ENCODE measurements at regions of chr9 and their contacts with region 1.

Region 1: GRCh38 chr9:36190388-36191287 is at the start of gene CLTA:
- DNase-seq: peak; percentile 96
- ATAC-seq: peak; percentile 99
- H3K4me3 Mint-ChIP-seq: peak within 1 kb of the TSS; percentile 95
- H3K27ac Mint-ChIP-seq: peak within 1 kb of the TSS; percentile 88
- H3K4me1 Mint-ChIP-seq: peaks cover 45% of the 10 kb centered on the region
- H3K27me3 Mint-ChIP-seq: no peaks in the 10 kb centered on the region
- total RNA-seq, gene CLTA: 123 to 133 TPM

Region 2: DNA sequence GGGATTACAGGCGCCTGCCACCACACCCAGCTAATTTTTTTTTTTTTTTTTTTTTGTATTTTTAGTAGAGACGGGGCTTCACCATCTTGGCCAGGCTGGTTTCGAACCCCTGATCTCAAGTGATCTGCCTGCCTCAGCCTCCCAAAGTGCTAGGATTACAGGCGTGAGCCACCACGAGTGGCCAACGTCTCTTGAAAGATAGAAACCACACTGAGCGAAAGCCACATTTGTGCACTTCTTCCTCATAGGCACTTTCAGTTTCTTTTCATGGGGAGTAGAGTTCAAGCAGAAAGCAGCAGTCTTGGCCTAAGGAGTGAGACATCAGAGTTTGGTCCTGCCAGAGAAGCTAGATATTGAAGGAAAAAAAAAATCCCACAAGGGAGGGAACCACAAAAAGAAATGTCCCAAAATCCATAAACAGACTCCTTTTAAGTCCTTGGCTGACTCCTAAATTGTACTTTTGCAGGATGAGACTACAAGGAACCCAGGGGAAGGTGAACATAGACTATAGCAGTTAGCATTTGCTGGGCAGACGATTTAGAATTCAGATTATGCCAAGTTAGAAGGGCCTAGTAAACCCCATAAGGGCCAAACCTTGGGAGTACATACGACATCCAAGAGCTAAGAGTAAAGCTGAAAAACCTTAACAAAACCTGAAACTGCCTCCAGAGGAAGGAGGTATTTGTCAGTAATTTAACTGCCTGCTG is 98.0 kb before region 1 on chr9:
- CTCF ChIA-PET with region 1: no interaction called
- POLR2A ChIA-PET with region 1: no interaction called
- intact Hi-C with region 1: no loop called
- DNase-seq: peak; percentile 60
- ATAC-seq: peak; percentile 99
- H3K4me3 Mint-ChIP-seq: no peak overlapping the region
- H3K27ac Mint-ChIP-seq: peak overlapping the region; percentile 39
- H3K4me1 Mint-ChIP-seq: peaks cover 18% of the 10 kb centered on the region
- H3K27me3 Mint-ChIP-seq: no peaks in the 10 kb centered on the region

Region 3: DNA sequence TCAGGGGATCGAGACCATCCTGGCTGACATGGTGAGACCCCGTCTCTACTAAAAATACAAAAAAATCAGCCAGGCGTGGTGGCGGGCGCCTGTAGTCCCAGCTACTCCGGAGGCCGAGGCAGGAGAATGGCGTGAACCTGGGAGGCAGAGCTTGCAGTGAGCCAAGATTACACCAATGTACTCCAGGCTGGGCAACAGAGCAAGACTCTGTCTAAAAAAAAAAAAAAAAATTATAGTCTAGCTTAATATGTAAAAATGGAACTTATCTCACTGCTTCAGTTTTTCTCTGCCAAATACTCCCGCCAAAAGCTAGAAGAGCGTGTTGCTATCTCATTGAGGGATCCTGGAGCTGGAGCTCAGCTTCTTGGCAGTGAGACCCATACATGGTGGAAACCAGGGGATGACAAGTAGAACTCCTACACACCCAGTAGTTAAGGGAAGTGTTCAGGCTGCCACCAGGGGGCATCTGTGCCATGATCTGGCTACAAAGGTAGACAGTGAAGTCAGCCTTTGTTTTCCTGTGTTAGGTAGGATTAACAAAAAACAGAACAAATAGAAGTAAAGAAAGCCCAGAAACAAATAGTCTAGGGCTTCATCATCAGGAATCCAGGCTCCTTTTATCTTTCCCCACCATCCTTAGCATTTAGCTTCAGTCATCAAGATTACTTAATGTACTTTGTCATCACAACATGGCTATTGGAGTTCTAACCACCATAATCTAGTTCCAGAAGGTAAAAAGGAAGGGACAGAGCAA is 87.7 kb before region 1 on chr9:
- CTCF ChIA-PET with region 1: interaction called, 24 read pairs
- POLR2A ChIA-PET with region 1: no interaction called
- intact Hi-C with region 1: no loop called
- DNase-seq: peak; percentile 94
- ATAC-seq: peak; percentile 100
- H3K4me3 Mint-ChIP-seq: no peak overlapping the region
- H3K27ac Mint-ChIP-seq: no peak overlapping the region
- H3K4me1 Mint-ChIP-seq: peaks cover 6% of the 10 kb centered on the region
- H3K27me3 Mint-ChIP-seq: no peaks in the 10 kb centered on the region

Region 4: DNA sequence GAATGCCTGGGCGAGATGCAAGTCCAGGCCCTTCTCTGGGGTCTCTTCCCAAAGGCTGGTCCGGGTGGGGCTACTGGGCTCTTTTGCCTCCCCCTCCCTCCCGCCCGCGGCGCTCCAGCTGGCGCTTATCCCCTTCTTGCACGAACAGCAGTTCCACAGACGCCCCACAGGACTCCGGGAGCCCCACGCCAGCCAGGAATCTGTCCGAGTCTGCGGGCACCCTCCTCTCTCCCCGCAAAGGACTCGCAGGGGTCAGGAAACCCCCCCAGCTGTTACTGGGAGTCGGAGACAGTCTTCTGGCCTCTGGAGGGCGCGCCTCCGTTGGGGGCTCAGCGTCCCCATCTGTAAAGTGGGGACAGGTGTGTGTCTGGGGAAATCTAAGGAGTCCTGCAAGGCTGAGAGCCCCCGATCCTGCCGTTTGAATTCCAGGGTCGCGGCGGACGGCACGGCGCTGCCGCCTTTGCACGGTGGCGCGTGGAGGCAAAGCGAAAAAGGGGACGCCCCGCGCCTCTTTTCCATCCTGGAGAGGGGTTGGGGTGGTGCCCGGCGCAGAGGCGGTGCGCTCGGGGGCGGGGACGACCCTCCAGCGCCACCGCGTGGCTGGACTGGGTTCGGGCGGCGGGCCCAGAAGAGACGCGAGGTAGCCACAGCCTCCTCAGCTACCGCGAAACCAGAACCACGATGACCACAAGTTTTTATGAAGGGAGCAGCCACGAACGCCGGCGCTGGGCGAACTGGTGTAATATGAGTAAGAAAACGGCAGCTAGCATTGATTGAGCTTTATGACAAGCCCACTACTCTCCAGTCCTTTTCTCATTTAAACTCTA is 24.3 kb before region 1 on chr9:
- CTCF ChIA-PET with region 1: interaction called, 25 read pairs
- POLR2A ChIA-PET with region 1: interaction called, 3 read pairs
- intact Hi-C with region 1: no loop called
- DNase-seq: peak; percentile 90
- ATAC-seq: peak; percentile 97
- H3K4me3 Mint-ChIP-seq: peak overlapping the region; percentile 69
- H3K27ac Mint-ChIP-seq: peak overlapping the region; percentile 31
- H3K4me1 Mint-ChIP-seq: peaks cover 6% of the 10 kb centered on the region
- H3K27me3 Mint-ChIP-seq: no peaks in the 10 kb centered on the region

Region 5: DNA sequence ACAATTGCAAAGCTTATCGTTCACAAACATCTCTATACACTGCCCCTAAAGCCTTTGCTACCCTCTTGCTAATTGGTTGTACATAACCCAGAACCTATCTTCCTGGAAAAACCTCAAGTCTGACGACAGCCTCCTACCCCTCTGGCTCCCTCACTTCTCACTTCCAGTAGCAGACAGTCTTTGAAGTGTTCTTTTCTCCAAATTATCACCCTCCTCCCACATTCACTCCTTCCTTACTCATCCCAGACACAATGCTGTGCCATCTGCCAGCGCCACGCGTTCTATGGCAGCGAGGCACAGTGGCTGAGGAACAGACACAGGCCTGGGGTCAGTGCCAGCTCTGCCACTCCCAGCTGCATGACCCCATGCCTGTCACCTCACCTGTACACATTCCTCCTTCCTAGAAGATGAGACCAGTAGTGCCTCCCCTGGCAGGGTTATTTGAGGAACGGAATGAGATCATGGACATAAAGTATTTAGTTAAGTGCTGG is 27.8 kb after region 1 on chr9:
- CTCF ChIA-PET with region 1: interaction called, 3 read pairs
- POLR2A ChIA-PET with region 1: interaction called, 3 read pairs
- intact Hi-C with region 1: loop called in 1 of 2 experiments (anchors 2 kb)
- DNase-seq: peak; percentile 23
- ATAC-seq: peak; percentile 80
- H3K4me3 Mint-ChIP-seq: no peak overlapping the region
- H3K27ac Mint-ChIP-seq: peak overlapping the region; percentile 86
- H3K4me1 Mint-ChIP-seq: peaks cover 37% of the 10 kb centered on the region
- H3K27me3 Mint-ChIP-seq: no peaks in the 10 kb centered on the region

Region 6: DNA sequence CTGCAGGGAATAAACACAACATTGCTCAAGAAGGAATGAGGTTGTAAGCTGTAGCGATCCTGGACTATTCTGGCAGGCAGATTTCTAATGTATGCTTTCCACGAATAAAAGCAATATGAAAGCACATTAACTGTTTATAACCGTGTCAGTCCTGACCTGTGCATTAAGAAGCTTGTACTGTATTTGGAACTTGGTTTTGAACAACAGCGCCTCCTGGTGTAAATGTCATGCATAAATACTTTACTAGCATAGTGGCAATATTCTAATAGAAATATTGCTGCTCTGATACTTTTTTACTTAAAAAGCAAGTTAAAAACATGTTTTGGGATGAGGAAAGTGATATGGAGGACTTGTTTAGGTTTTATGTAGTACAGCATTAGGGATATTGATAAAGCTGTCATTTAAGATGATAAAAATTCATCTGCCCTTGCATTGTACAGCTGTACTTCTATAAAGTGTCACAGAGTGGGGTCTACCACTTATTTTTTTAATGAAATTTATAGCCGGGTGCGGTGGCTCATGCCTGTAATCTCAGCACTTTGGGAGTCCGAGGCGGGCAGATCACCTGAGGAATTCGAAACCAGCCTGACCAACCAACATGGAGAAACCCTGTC is 138.3 kb after region 1 on chr9:
- CTCF ChIA-PET with region 1: interaction called, 38 read pairs
- POLR2A ChIA-PET with region 1: interaction called, 3 read pairs
- intact Hi-C with region 1: loop called (anchors 1 to 2 kb)
- DNase-seq: peak; percentile 58
- ATAC-seq: peak; percentile 81
- H3K4me3 Mint-ChIP-seq: no peak overlapping the region
- H3K27ac Mint-ChIP-seq: no peak overlapping the region
- H3K4me1 Mint-ChIP-seq: no peaks in the 10 kb centered on the region
- H3K27me3 Mint-ChIP-seq: no peaks in the 10 kb centered on the region

Region 7: DNA sequence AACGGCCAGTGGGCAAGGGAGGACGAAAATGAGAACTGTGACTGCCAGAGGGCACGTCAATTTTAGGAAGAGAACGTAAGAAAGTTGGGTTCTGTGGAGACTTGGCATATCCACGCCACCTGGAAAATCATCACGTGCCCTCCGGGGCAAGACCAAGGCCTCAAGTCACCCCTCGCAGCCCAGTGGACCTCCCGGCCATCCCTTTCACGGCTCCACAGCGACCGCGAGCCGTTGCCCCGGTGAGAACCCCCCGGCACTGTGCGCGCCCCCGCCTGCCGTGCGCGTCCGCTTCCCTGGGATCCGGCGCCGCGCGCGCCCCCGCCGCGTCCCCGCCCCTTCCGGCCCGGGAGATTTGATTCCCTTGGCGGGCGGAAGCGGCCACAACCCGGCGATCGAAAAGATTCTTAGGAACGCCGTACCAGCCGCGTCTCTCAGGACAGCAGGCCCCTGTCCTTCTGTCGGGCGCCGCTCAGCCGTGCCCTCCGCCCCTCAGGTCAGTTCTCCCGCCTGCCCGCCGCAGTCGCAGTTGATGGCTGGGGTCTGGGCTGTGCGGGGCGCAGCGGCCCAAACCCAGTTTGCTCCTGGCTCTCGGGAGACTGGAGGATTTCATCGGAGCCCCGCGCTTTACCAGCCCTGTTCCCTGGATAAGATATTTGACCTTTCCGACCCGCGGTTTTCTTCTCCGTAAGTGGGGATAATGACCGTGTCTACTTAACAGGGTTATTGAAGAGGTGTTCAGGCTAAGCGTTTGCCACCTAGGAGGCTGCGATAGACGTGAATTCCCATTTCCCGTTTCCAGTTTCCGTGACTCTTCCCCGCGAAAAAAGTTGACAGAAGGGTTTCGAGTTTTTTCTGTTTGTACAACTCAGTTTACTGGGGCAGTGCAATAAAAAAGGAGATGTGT is 382.1 kb after region 1 on chr9 and contains the start of gene MELK:
- CTCF ChIA-PET with region 1: no interaction called
- POLR2A ChIA-PET with region 1: no interaction called
- intact Hi-C with region 1: loop called in 1 of 2 experiments (anchors 1 kb)
- DNase-seq: peak; percentile 89
- ATAC-seq: peak; percentile 73
- H3K4me3 Mint-ChIP-seq: peak within 1 kb of the TSS; percentile 97
- H3K27ac Mint-ChIP-seq: peak within 1 kb of the TSS; percentile 85
- H3K4me1 Mint-ChIP-seq: peaks cover 27% of the 10 kb centered on the region
- H3K27me3 Mint-ChIP-seq: no peaks in the 10 kb centered on the region
- total RNA-seq, gene MELK: 63.9 to 66.1 TPM

Measured in activated CD4-positive, alpha-beta T cell treated with anti-CD3 and anti-CD28 coated beads for 36 hours (primary cell).